CD4-positive, alpha-beta memory T cell (primary cell): ENCODE measurements at regions of chr1 and their contacts with region 1.

Region 1: GRCh38 chr1:53326088-53326597 is 1.7 kb downstream of the LRP8 start:
- DNase-seq: peak; percentile 86 to 92 (median 87)
- H3K4me3 ChIP-seq: peak overlapping the region; percentile 78 to 82
- H3K4me3 Mint-ChIP-seq: peak overlapping the region; percentile 88 to 98 (median 93)
- H3K27ac ChIP-seq: peak overlapping the region; percentile 60
- H3K27ac Mint-ChIP-seq: peak overlapping the region; percentile 84 to 94 (median 89)
- H3K4me1 ChIP-seq: peaks cover 12% of the 10 kb centered on the region
- H3K4me1 Mint-ChIP-seq: peaks cover 11 to 30% (median 19%) of the 10 kb centered on the region in 4 donors
- H3K27me3 ChIP-seq: no peaks in the 10 kb centered on the region
- H3K27me3 Mint-ChIP-seq: no peaks in the 10 kb centered on the region

Region 2: GRCh38 chr1:53196485-53197270 is 129.5 kb before region 1 on chr1 and contains the start of gene CPT2:
- CTCF ChIA-PET with region 1: no interaction called
- POLR2A ChIA-PET with region 1: interaction called, 6 read pairs
- intact Hi-C with region 1: loop called (anchors 2 kb)
- DNase-seq: peak; percentile 90 to 92 (median 91)
- H3K4me3 ChIP-seq: peak within 1 kb of the TSS; percentile 31 to 98
- H3K4me3 Mint-ChIP-seq: peak within 1 kb of the TSS; percentile 92 to 98 (median 96)
- H3K27ac ChIP-seq: peak within 1 kb of the TSS; percentile 91
- H3K27ac Mint-ChIP-seq: peak within 1 kb of the TSS; percentile 93 to 100 (median 99)
- H3K4me1 ChIP-seq: peaks cover 26% of the 10 kb centered on the region
- H3K4me1 Mint-ChIP-seq: peaks cover 15 to 40% (median 29%) of the 10 kb centered on the region in 4 donors
- H3K27me3 ChIP-seq: no peaks in the 10 kb centered on the region
- H3K27me3 Mint-ChIP-seq: no peaks in the 10 kb centered on the region
- total RNA-seq, gene CPT2: 17.8 to 18.9 TPM

Region 3: DNA sequence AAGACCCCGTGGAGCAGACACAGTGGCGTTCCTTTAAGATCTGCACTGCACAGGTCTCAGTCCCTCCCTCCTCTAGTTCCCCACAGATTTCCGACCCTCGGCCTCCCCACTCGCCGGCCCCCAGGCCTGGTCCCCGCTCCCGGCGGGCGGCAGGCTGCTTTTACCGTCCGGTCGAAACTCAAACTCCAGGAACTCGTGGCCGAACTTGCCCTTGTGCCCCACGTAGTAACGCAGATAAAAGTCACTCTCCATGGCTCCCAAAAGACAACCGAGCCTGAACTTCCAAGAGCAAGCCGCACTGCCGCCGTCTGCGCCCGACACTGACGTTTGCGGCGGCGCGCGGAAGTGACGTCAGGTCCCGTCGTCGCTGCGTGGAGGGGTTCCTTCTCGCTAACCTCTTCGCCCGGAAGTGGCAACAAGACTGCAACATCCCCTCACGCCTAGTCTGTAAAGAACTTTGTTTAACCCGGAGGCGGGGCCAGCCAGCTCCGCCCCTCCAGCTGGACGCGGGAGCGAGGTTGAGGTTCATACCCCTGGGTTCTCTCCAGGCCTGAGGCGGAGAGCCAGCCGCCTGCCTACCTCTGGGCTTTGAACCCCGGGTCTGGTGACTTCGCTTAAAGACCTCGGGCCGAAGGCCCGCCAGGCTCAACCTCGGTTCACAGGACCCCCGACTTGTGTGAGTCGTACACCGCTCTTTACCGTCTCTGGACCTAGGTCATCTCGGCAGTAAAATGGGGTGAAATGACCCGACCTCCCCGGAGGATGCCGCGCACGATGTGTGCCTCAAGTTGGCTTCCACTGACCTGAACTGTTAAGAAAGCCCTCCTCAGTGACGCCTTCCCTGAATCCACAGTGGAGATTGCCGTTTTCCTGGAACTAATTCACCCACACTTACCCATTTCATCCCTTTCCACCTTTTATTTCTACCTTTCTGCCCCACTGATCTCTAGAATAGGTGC is 87.7 kb before region 1 on chr1 and contains the start of gene MAGOH:
- CTCF ChIA-PET with region 1: no interaction called
- POLR2A ChIA-PET with region 1: no interaction called
- intact Hi-C with region 1: loop called (anchors 1 kb)
- DNase-seq: peak; percentile 93 to 95 (median 94)
- H3K4me3 ChIP-seq: peak within 1 kb of the TSS; percentile 87 to 96
- H3K4me3 Mint-ChIP-seq: peak within 1 kb of the TSS; percentile 96 to 99 (median 97)
- H3K27ac ChIP-seq: peak within 1 kb of the TSS; percentile 87
- H3K27ac Mint-ChIP-seq: peak within 1 kb of the TSS; percentile 97 to 99 (median 98)
- H3K4me1 ChIP-seq: peaks cover 31% of the 10 kb centered on the region
- H3K4me1 Mint-ChIP-seq: peaks cover 21 to 36% (median 29%) of the 10 kb centered on the region in 4 donors
- H3K27me3 ChIP-seq: no peaks in the 10 kb centered on the region
- H3K27me3 Mint-ChIP-seq: no peaks in the 10 kb centered on the region
- total RNA-seq, gene MAGOH: 46.7 to 49.9 TPM

Region 4: GRCh38 chr1:53294567-53294966 is 31.6 kb before region 1 on chr1:
- CTCF ChIA-PET with region 1: interaction called, 5 read pairs
- POLR2A ChIA-PET with region 1: interaction called, 21 read pairs
- intact Hi-C with region 1: loop called (anchors 5 kb)
- DNase-seq: peak in 4 of 5 donors; percentile 16 to 27 (median 22)
- H3K4me3 ChIP-seq: no peak overlapping the region
- H3K4me3 Mint-ChIP-seq: peak overlapping the region in 5 of 8 donors; percentile 12 to 65 (median 50)
- H3K27ac ChIP-seq: peak overlapping the region; percentile 1
- H3K27ac Mint-ChIP-seq: peak overlapping the region in 6 of 7 donors; percentile 49 to 93 (median 86)
- H3K4me1 ChIP-seq: peaks cover 49% of the 10 kb centered on the region
- H3K4me1 Mint-ChIP-seq: peaks cover 20 to 60% (median 40%) of the 10 kb centered on the region in 4 donors
- H3K27me3 ChIP-seq: no peaks in the 10 kb centered on the region
- H3K27me3 Mint-ChIP-seq: no peaks in the 10 kb centered on the region

Region 5: DNA sequence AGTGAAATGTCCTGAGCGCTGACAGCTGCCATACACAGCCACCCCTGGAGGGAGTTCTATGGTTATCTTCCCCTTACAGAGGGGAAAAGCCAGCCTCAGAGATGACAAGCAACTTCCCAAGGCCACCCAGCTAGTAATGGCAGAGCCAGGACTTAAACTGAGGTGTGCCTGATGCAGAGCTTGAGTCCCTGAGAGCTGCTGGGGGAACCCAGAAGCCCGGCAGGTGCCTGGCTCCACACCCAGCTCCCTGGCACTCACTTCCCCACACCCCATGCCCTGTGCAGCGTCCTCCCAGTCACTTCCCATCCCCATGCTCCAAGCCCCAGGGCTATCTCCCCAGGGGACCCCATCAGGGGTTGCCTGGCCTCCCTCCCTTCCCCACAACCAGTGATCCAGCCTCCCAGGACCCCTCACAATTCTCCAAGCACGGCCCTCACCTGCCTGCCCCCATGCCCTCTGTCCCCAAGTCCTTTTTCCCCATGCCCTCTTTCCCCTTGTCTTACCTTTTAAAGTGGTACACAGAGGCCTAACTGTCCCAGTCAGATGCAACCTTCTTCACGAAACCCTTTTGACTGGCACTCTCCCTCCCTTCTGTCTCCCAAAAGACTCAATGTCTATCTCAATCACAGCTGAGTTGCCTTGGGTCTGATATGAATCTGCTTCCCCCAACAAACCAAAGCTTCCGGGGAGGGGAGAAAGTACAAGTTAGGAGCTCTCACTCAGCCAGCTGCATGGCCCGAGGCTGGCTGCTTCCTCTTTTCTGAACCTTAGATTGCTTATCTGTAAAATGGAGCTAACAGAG is 41.6 kb after region 1 on chr1:
- CTCF ChIA-PET with region 1: no interaction called
- POLR2A ChIA-PET with region 1: interaction called, 31 read pairs
- intact Hi-C with region 1: loop called (anchors 2 kb)
- DNase-seq: peak; percentile 27 to 57 (median 41)
- H3K4me3 ChIP-seq: peak overlapping the region in 1 of 2 donors; percentile 39
- H3K4me3 Mint-ChIP-seq: peak overlapping the region; percentile 87 to 96 (median 91)
- H3K27ac ChIP-seq: peak overlapping the region; percentile 10
- H3K27ac Mint-ChIP-seq: peak overlapping the region; percentile 61 to 98 (median 93)
- H3K4me1 ChIP-seq: peaks cover 28% of the 10 kb centered on the region
- H3K4me1 Mint-ChIP-seq: peaks cover 11 to 31% (median 22%) of the 10 kb centered on the region in 4 donors
- H3K27me3 ChIP-seq: no peaks in the 10 kb centered on the region
- H3K27me3 Mint-ChIP-seq: no peaks in the 10 kb centered on the region

Region 6: GRCh38 chr1:53393325-53393792 is 67.2 kb after region 1 on chr1:
- CTCF ChIA-PET with region 1: interaction called, 10 read pairs
- POLR2A ChIA-PET with region 1: interaction called, 5 read pairs
- intact Hi-C with region 1: loop called (anchors 1 kb)
- DNase-seq: peak; percentile 49 to 71 (median 52)
- H3K4me3 ChIP-seq: no peak overlapping the region
- H3K4me3 Mint-ChIP-seq: peak overlapping the region in 1 of 8 donors; percentile 31
- H3K27ac ChIP-seq: no peak overlapping the region
- H3K27ac Mint-ChIP-seq: peak overlapping the region in 3 of 7 donors; percentile 13 to 29 (median 23)
- H3K4me1 ChIP-seq: peaks cover 5% of the 10 kb centered on the region
- H3K4me1 Mint-ChIP-seq: peaks cover 0 to 8% (median 2%) of the 10 kb centered on the region in 4 donors
- H3K27me3 ChIP-seq: no peaks in the 10 kb centered on the region
- H3K27me3 Mint-ChIP-seq: no peaks in the 10 kb centered on the region

Region 7: GRCh38 chr1:53450225-53450624 is 124.1 kb after region 1 on chr1:
- CTCF ChIA-PET with region 1: no interaction called
- POLR2A ChIA-PET with region 1: no interaction called
- intact Hi-C with region 1: no loop called
- DNase-seq: no peak
- H3K4me3 ChIP-seq: no peak overlapping the region
- H3K4me3 Mint-ChIP-seq: no peak overlapping the region
- H3K27ac ChIP-seq: no peak overlapping the region
- H3K27ac Mint-ChIP-seq: no peak overlapping the region
- H3K4me1 ChIP-seq: no peaks in the 10 kb centered on the region
- H3K4me1 Mint-ChIP-seq: peaks cover 0 to 2% (median 0%) of the 10 kb centered on the region in 4 donors
- H3K27me3 ChIP-seq: no peaks in the 10 kb centered on the region
- H3K27me3 Mint-ChIP-seq: peaks cover 0 to 2% of the 10 kb centered on the region in 2 donors